OCI-LY7 (cell line): ENCODE measurements at regions of chr7 and their contacts with region 1.

Region 1: DNA sequence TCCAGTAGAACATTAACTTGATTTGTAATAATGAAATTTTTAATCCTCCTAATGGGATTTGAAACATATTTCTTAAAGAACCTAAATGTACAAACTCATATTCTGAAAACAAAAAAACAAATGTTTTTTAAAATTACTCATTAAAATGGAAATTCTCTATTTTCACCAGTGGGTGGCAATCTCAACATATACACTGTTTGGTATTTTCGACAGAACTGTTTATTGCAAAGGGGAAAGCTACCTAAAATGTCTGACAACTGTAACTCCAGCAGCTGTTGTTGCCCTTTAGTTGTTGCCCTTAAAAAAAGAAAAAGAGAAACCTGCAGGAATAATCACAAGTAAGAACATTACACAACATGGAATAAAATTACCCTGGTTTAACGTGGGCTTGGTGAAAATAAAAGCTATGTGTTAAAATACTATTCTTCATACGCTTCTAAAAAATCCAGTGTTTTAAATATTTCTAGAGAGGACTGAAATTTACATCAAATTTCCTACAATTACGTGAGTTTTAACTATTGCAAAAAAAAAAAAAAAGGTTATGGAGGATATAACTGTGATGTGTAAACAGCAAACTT is 54.5 kb downstream of the COL1A2 start:
- DNase-seq: peak; percentile 66
- H3K4me3 ChIP-seq: no peak overlapping the region
- H3K27ac ChIP-seq: no peak overlapping the region
- H3K4me1 ChIP-seq: no peaks in the 10 kb centered on the region
- CTCF ChIP-seq: peak; percentile 90

Region 2: GRCh38 chr7:94657771-94658693 is 208.8 kb after region 1 on chr7:
- CTCF ChIA-PET with region 1: interaction called, 3 read pairs
- POLR2A ChIA-PET with region 1: interaction called, 14 read pairs
- intact Hi-C with region 1: loop called (anchors 1 kb)
- DNase-seq: peak; percentile 94
- H3K4me3 ChIP-seq: peak overlapping the region; percentile 71
- H3K27ac ChIP-seq: peak overlapping the region; percentile 42
- H3K4me1 ChIP-seq: peaks cover 5% of the 10 kb centered on the region
- CTCF ChIP-seq: peak; percentile 29; the same call in 1 of the 2 replicates

Region 3: GRCh38 chr7:95199779-95200558 is 750.7 kb after region 1 on chr7:
- CTCF ChIA-PET with region 1: no interaction called
- POLR2A ChIA-PET with region 1: no interaction called
- intact Hi-C with region 1: loop called (anchors 5 kb)
- DNase-seq: peak; percentile 25
- H3K4me3 ChIP-seq: no peak overlapping the region
- H3K27ac ChIP-seq: no peak overlapping the region
- H3K4me1 ChIP-seq: no peaks in the 10 kb centered on the region
- CTCF ChIP-seq: peak; percentile 77

Region 4: DNA sequence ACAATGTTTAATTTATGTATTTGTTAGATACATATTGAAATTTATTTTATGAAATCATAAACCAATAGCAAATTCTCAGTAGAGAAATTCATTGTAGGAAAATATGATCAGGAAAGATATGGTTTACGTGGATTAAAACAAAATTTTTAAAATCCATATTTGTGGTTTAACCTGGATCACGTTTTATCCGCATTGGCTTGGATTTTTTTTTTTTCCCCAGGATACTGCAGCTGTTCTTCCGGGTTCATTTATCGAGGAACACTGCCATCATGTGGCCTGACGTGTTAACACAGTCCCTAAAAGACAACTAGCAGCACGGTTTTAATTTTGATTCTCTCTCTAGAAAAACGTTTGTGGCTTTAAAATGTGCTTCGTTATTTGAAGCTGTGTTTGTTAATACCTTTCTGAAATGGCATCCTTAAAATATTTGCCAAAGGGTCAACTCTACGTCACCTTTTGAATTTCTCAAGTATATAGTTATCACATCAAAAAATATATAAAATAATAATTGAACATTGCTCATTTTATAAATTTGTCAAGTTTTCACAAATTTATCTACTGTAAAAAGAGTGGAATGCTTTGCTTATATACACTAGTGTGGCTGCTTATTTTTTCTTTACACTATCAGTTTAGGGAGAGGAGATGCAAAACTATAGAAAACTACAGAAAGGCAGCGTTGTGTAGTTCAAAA is 1027.8 kb after region 1 on chr7:
- CTCF ChIA-PET with region 1: interaction called, 3 read pairs
- POLR2A ChIA-PET with region 1: no interaction called
- intact Hi-C with region 1: loop called (anchors 2 kb)
- DNase-seq: peak; percentile 77
- H3K4me3 ChIP-seq: no peak overlapping the region
- H3K27ac ChIP-seq: no peak overlapping the region
- H3K4me1 ChIP-seq: peaks cover 7% of the 10 kb centered on the region
- CTCF ChIP-seq: peak; percentile 94